ENCODE measurements at regions of chr15 and their contacts with region 1.

Region 1: DNA sequence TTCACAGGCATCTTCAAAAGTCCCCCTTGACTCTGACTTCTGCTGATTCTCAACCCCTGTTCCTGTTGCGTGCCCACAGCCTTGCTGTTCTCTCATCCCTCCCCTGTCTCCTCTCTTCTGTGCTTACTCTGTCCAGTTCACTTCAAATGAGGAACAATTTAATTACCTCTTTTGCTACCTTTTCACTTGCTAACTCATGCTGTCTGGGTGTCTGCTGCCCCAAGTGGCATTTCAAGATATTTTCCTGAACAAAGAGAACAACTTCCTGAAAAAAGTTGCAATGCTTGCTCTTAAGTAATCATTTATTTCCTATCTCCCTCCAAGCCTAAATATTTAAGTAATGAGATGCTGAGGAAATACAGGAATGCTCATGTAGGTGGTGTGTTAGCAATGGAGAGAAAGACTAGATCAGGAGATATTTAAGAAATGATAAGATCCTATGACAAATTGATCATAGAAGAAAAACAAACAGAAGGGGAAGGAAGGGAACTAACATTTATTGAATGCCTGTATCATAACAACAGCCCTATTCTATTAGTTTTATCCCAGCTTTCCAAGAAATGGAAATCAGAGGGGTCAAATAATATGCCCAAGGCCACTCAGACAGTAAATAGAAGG is 42.2 kb downstream of the SV2B start:
- DNase-seq: peak; percentile 3
- H3K4me3 ChIP-seq: no peak overlapping the region
- H3K27ac ChIP-seq: no peak overlapping the region
- H3K4me1 ChIP-seq: no peaks in the 10 kb centered on the region
- H3K27me3 ChIP-seq: no peaks in the 10 kb centered on the region
- CTCF ChIP-seq: peak in 1 of 2 donors; percentile 14
- POLR2A ChIP-seq: no peak

Region 2: DNA sequence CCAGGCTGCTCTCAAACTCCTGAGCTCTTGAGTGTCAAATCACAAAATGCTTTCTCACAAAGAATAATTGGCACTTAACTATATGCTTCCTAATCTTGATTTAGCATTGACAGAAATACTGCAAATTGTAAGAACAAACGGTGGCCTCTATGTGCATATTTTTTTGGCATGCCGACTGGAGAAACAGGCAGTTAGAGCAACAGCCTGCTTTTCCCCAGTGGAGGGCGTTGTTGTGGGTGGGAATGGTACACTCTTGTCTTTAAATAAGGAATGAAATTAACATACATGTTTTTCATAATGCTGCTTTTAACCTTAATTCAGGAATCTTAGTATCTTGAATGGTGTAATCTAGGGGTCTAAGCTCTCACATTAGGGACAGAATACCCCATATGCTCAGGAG is 73.3 kb before region 1 on chr15:
- CTCF ChIA-PET with region 1: no interaction called
- POLR2A ChIA-PET with region 1: no interaction called
- dilution Hi-C with region 1: no loop called
- intact Hi-C with region 1: no loop called
- DNase-seq: no peak
- H3K4me3 ChIP-seq: no peak overlapping the region
- H3K27ac ChIP-seq: no peak overlapping the region
- H3K4me1 ChIP-seq: no peaks in the 10 kb centered on the region
- H3K27me3 ChIP-seq: no peaks in the 10 kb centered on the region
- CTCF ChIP-seq: no peak
- POLR2A ChIP-seq: no peak

Region 3: DNA sequence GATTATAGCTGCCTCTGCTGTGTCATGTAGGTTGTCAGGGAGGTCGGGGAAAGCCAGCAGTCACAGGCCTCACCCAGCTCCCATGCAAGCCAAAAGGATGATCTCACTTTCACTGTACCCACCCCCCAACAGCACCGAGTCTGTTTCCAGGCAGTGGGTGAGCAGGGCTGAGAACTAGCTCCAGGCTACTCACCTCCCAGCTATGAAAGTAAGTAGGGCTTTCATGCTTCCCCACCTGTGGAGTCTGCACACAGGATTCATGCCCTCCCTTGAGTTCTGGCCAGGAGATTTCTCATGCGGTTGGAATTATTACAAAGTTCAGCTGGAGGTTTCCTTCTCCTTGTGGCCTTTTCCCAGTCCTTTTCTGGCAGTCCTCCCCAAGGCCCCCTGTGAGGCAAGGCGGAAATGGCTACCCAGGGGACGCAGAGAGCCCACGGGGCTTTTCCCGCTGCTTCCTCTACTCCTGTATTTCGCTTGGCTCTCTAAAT is 314.1 kb after region 1 on chr15:
- CTCF ChIA-PET with region 1: no interaction called
- POLR2A ChIA-PET with region 1: no interaction called
- dilution Hi-C with region 1: no loop called
- intact Hi-C with region 1: loop called (anchors 5 kb)
- DNase-seq: no peak
- H3K4me3 ChIP-seq: no peak overlapping the region
- H3K27ac ChIP-seq: no peak overlapping the region
- H3K4me1 ChIP-seq: no peaks in the 10 kb centered on the region
- H3K27me3 ChIP-seq: no peaks in the 10 kb centered on the region
- CTCF ChIP-seq: no peak
- POLR2A ChIP-seq: no peak

Region 4: DNA sequence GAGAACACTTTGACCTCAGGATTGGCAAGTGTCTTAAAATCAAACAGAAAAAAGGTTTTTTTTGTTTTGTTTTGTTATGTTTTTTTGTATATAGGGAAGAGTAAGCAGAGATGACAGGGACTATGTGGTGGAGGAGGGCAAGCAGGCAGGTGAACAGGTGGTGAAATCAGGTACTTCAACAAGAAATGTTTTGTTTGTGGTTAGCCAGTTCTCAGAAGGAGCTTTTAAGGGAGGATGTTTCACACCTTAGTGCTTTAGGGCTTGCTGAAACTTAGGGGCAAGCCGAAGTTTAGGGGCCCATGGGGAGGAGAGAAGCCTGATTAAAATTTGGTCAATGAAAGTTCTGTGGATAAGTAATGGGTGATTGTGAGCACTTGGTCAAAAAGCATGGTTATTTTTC is 340.6 kb after region 1 on chr15:
- CTCF ChIA-PET with region 1: no interaction called
- POLR2A ChIA-PET with region 1: no interaction called
- dilution Hi-C with region 1: no loop called
- intact Hi-C with region 1: no loop called
- DNase-seq: no peak
- H3K4me3 ChIP-seq: no peak overlapping the region
- H3K27ac ChIP-seq: no peak overlapping the region
- H3K4me1 ChIP-seq: no peaks in the 10 kb centered on the region
- H3K27me3 ChIP-seq: no peaks in the 10 kb centered on the region
- CTCF ChIP-seq: no peak
- POLR2A ChIP-seq: no peak

Region 5: GRCh38 chr15:91664224-91664836 is 522.1 kb after region 1 on chr15:
- CTCF ChIA-PET with region 1: no interaction called
- POLR2A ChIA-PET with region 1: no interaction called
- dilution Hi-C with region 1: no loop called
- intact Hi-C with region 1: no loop called
- DNase-seq: no peak
- H3K4me3 ChIP-seq: no peak overlapping the region
- H3K27ac ChIP-seq: no peak overlapping the region
- H3K4me1 ChIP-seq: no peaks in the 10 kb centered on the region
- H3K27me3 ChIP-seq: no peaks in the 10 kb centered on the region
- CTCF ChIP-seq: no peak
- POLR2A ChIP-seq: no peak

Measured in endothelial cell of umbilical vein (primary cell).